MCF 10A (cell line): ENCODE measurements at regions of chr1 and their contacts with region 1.

Region 1: GRCh38 chr1:207499573-207499972 is 3.6 kb downstream of the CR1 start:
- DNase-seq: peak; percentile 90
- H3K4me3 Mint-ChIP-seq: no peak overlapping the region
- H3K27ac Mint-ChIP-seq: no peak overlapping the region
- H3K4me1 Mint-ChIP-seq: peaks cover 6% of the 10 kb centered on the region
- H3K27me3 Mint-ChIP-seq: peaks cover 68% of the 10 kb centered on the region
- CTCF ChIP-seq: peak; percentile 97

Region 2: DNA sequence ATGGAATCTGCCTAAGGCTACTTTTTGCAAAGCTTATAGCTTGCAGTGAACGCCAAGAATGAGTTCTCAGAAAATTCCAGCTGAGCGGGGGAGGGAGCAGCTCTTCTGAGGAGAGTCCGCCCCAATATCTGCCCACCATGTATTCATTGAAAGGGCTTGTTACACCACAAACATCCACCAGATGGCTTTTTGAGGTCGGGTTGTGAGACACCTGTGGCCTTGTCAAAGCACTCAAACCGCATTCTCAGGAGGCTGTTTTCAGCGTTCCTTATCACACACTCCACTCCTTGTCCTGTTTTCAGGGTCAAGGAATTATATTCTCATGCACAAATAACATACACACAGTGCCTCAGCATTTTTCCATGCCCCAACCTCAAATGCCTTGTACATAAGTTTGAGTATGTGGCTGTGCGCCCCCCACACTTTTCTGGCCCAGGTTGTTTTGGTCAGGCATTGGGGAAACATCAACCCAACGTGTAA is 414.8 kb before region 1 on chr1:
- CTCF ChIA-PET with region 1: interaction called, 168 read pairs
- POLR2A ChIA-PET with region 1: interaction called, 3 read pairs
- intact Hi-C with region 1: loop called (anchors 1 kb)
- DNase-seq: peak; percentile 90
- H3K4me3 Mint-ChIP-seq: no peak overlapping the region
- H3K27ac Mint-ChIP-seq: no peak overlapping the region
- H3K4me1 Mint-ChIP-seq: peaks cover 6% of the 10 kb centered on the region
- H3K27me3 Mint-ChIP-seq: peaks cover 21% of the 10 kb centered on the region
- CTCF ChIP-seq: peak; percentile 92

Region 3: GRCh38 chr1:207259391-207259790 is 240.2 kb before region 1 on chr1:
- CTCF ChIA-PET with region 1: interaction called, 4 read pairs
- POLR2A ChIA-PET with region 1: no interaction called
- intact Hi-C with region 1: loop called (anchors 1 kb)
- DNase-seq: peak; percentile 77
- H3K4me3 Mint-ChIP-seq: no peak overlapping the region
- H3K27ac Mint-ChIP-seq: no peak overlapping the region
- H3K4me1 Mint-ChIP-seq: no peaks in the 10 kb centered on the region
- H3K27me3 Mint-ChIP-seq: no peaks in the 10 kb centered on the region
- CTCF ChIP-seq: peak; percentile 71

Region 4: GRCh38 chr1:207430602-207431001 is 69.0 kb before region 1 on chr1:
- CTCF ChIA-PET with region 1: interaction called, 16 read pairs
- POLR2A ChIA-PET with region 1: no interaction called
- intact Hi-C with region 1: no loop called
- DNase-seq: no peak
- H3K4me3 Mint-ChIP-seq: no peak overlapping the region
- H3K27ac Mint-ChIP-seq: no peak overlapping the region
- H3K4me1 Mint-ChIP-seq: no peaks in the 10 kb centered on the region
- H3K27me3 Mint-ChIP-seq: peaks cover 70% of the 10 kb centered on the region
- CTCF ChIP-seq: no peak

Region 5: DNA sequence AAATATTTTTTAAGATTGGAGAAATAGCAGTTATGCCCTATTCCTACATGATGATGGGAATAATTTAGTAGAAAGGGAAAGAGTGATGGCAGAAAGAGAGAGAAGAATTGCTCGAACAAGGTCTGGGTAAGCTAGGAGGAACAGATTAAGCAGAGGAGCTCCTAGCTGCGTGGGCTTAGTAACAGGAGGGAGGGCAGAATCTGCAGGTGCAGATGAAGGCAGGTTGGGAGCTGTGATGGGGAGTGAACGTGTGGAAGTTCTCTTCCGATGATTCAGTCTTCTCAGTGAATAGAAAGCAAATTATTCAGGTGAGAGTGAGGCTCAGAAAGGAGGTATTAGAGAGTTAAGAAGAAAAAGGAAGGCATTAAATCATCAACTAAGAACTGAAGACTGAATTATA is 11.9 kb before region 1 on chr1:
- CTCF ChIA-PET with region 1: interaction called, 30 read pairs
- POLR2A ChIA-PET with region 1: interaction called, 4 read pairs
- intact Hi-C with region 1: no loop called
- DNase-seq: no peak
- H3K4me3 Mint-ChIP-seq: no peak overlapping the region
- H3K27ac Mint-ChIP-seq: no peak overlapping the region
- H3K4me1 Mint-ChIP-seq: no peaks in the 10 kb centered on the region
- H3K27me3 Mint-ChIP-seq: peaks cover 49% of the 10 kb centered on the region
- CTCF ChIP-seq: no peak

Region 6: GRCh38 chr1:207565546-207566358 is 66.2 kb after region 1 on chr1:
- CTCF ChIA-PET with region 1: interaction called, 18 read pairs
- POLR2A ChIA-PET with region 1: no interaction called
- intact Hi-C with region 1: no loop called
- DNase-seq: peak; percentile 65
- H3K4me3 Mint-ChIP-seq: no peak overlapping the region
- H3K27ac Mint-ChIP-seq: no peak overlapping the region
- H3K4me1 Mint-ChIP-seq: no peaks in the 10 kb centered on the region
- H3K27me3 Mint-ChIP-seq: peaks cover 32% of the 10 kb centered on the region
- CTCF ChIP-seq: peak; percentile 59

Region 7: GRCh38 chr1:207631137-207631536 is 131.6 kb after region 1 on chr1:
- CTCF ChIA-PET with region 1: no interaction called
- POLR2A ChIA-PET with region 1: no interaction called
- intact Hi-C with region 1: no loop called
- DNase-seq: no peak
- H3K4me3 Mint-ChIP-seq: no peak overlapping the region
- H3K27ac Mint-ChIP-seq: no peak overlapping the region
- H3K4me1 Mint-ChIP-seq: peaks cover 5% of the 10 kb centered on the region
- H3K27me3 Mint-ChIP-seq: peaks cover 16% of the 10 kb centered on the region
- CTCF ChIP-seq: no peak

Region 8: GRCh38 chr1:208423526-208423925 is 924.0 kb after region 1 on chr1:
- CTCF ChIA-PET with region 1: no interaction called
- POLR2A ChIA-PET with region 1: no interaction called
- intact Hi-C with region 1: no loop called
- DNase-seq: no peak
- H3K4me3 Mint-ChIP-seq: no peak overlapping the region
- H3K27ac Mint-ChIP-seq: no peak overlapping the region
- H3K4me1 Mint-ChIP-seq: no peaks in the 10 kb centered on the region
- H3K27me3 Mint-ChIP-seq: no peaks in the 10 kb centered on the region
- CTCF ChIP-seq: no peak